GM10248 (cell line): ENCODE measurements at regions of chr17 and their contacts with region 1.

Region 1: DNA sequence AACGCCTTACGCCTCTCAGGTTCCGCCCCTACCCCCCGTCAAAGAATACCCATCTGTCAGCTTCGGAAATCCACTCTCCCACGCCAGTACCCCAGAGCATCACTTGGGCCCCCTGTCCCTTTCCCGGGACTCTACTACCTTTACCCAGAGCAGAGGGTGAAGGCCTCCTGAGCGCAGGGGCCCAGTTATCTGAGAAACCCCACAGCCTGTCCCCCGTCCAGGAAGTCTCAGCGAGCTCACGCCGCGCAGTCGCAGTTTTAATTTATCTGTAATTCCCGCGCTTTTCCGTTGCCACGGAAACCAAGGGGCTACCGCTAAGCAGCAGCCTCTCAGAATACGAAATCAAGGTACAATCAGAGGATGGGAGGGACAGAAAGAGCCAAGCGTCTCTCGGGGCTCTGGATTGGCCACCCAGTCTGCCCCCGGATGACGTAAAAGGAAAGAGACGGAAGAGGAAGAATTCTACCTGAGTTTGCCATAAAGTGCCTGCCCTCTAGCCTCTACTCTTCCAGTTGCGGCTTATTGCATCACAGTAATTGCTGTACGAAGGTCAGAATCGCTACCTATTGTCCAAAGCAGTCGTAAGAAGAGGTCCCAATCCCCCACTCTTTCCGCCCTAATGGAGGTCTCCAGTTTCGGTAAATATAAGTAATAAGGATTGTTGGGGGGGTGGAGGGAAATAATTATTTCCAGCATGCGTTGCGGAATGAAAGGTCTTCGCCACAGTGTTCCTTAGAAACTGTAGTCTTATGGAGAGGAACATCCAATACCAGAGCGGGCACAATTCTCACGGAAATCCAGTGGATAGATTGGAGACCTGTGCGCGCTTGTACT is at the start of gene BRCA1:
- DNase-seq: peak; percentile 99
- CTCF ChIP-seq: no peak

Region 2: DNA sequence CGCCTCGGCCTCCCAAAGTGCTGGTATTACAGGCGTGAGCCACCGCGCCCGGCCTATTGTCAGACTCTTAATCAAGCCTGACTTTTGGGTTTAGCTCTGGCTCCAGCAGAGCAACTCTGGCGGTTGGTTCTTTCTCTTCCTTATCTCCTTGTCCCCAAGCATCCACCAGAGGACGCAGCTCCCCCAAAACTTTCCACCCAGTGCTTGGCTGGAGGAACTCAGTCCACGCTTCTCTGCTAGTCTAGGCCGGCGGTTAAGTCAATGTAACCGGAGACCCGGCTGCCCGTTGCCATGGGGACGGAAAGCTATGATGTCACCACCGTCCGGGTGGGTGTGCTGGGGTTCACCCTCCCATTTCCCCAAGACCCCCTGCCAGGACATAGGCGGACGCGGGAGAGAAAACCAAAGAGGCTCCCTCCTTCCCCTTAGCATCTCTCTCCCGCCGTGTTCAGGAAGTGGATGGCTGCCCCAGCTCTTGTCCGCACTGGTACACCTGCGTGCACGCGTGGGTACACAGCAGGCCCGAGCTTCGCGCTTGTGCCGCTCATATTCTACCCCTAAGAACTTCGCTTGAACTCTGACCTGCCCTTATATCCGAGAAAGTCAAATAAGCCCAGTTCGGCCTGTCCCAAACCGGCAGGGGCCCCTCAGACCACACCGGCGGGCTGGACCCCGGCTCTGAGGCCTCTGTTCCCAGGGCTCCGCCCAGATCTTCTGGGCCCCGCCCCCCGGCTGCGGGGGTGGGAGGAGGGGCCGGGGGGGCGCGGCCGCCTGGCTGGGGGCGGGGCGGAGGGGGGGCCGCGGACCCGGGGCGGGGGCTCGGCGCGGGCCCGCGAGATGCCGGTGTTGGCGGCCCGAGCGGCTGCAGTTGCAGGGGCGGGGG is 100.7 kb before region 1 on chr17 and contains the start of gene RND2:
- CTCF ChIA-PET with region 1: interaction called, 3 read pairs
- POLR2A ChIA-PET with region 1: interaction called, 10 read pairs
- DNase-seq: peak; percentile 89
- CTCF ChIP-seq: peak; percentile 63

Region 3: GRCh38 chr17:43219746-43220380 is 94.5 kb after region 1 on chr17:
- CTCF ChIA-PET with region 1: no interaction called
- POLR2A ChIA-PET with region 1: no interaction called
- DNase-seq: no peak
- CTCF ChIP-seq: no peak